ENCODE measurements at regions of chr18 and their contacts with region 1.

Region 1: DNA sequence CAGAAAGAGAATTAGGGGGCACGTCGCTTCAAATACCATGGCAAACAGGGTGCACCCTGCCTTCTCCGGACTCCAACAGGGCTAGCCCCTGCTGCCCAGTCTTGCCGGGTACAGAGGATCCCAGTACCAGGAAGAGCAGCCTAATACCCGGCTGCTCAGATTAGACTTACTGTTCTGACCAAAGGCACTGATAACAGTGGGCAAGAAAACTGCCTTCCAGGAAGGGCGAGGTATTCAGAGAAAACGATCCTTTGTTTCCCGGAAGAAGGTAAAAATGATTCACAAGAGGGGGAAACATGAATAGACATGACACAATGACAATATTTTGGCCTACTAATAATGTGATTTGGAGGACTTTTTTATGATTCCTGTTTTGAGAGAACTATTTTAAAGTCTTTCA is 99.9 kb downstream of the SS18 start:
- DNase-seq: no peak
- H3K4me3 ChIP-seq: no peak overlapping the region
- H3K27ac ChIP-seq: no peak overlapping the region
- H3K4me1 ChIP-seq: no peaks in the 10 kb centered on the region
- H3K27me3 ChIP-seq: no peaks in the 10 kb centered on the region
- CTCF ChIP-seq: no peak
- POLR2A ChIP-seq: no peak

Region 2: DNA sequence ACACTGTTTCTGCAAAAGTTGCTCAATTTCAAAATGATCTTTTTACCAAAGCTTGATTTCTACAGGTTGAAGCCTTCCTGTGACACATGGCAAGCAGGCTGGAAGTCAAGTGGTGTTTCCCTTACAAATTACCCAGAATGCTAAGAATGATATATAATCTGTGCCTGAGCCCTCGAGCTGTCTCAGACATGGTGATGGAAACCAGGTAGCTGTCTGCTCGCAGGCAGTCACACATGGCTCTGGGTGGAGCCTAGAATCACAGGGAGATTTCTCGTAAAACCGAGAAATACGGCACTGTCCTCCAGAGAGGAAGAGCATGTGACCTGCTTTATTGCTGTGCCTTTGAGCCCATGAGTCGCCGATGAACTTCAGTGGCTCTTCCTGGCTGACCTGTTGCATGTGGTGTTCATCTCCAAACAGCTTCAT is 1031.4 kb before region 1 on chr18:
- intact Hi-C with region 1: loop called (anchors 5 kb)
- DNase-seq: no peak
- H3K4me3 ChIP-seq: no peak overlapping the region
- H3K27ac ChIP-seq: no peak overlapping the region
- H3K4me1 ChIP-seq: no peaks in the 10 kb centered on the region
- H3K27me3 ChIP-seq: no peaks in the 10 kb centered on the region
- CTCF ChIP-seq: no peak
- POLR2A ChIP-seq: no peak